Activated naive CD4-positive, alpha-beta T cell treated with anti-CD3 and anti-CD28 coated beads for 36 hours (primary cell): ENCODE measurements at regions of chr11 and their contacts with region 1.

Region 1: DNA sequence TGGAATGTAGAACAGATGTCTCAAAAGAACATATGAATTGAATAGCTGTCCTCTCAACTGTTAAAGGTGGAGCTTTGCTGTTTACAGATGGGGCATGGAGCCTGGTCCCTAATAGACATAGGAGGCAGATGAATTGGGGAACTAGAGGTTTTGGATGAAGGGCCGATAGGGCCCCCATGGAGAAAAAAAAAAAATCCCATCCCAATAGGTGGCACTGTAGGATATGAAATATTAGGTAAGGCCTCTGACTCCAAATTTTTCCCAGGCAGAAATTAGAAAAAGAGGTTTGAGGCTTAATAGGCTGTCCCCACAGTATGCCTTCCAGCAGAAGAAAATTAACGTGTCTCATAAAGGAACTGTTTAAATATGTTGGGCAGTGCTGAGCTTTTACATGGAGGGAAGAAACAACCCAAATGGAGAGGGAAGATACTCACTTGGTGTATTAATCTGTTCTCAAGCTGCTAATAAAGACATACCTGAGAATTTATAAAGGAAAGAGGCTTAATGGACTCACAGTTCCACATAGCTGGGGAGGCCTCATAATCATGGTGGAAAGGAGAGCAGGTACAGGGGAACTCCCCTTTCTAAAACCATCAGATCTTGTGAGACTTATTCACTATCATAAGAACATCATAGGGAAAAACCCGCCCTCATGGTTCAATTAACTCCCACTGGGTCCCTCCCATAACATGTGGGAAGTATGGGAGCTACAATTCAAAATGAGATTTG is 30.1 kb upstream of the TMEM45B start:
- DNase-seq: no peak
- H3K4me3 Mint-ChIP-seq: no peak overlapping the region
- H3K27ac Mint-ChIP-seq: no peak overlapping the region
- H3K4me1 Mint-ChIP-seq: peaks cover 17% of the 10 kb centered on the region
- H3K27me3 Mint-ChIP-seq: no peaks in the 10 kb centered on the region

Region 2: GRCh38 chr11:129853518-129854236 is 68.1 kb after region 1 on chr11:
- CTCF ChIA-PET with region 1: interaction called, 3 read pairs
- intact Hi-C with region 1: loop called (anchors 5 kb)
- DNase-seq: peak; percentile 84
- H3K4me3 Mint-ChIP-seq: no peak overlapping the region
- H3K27ac Mint-ChIP-seq: peak overlapping the region; percentile 86
- H3K4me1 Mint-ChIP-seq: peaks cover 38% of the 10 kb centered on the region
- H3K27me3 Mint-ChIP-seq: no peaks in the 10 kb centered on the region

Region 3: GRCh38 chr11:129895126-129896041 is 109.8 kb after region 1 on chr11 and contains the start of gene NFRKB:
- CTCF ChIA-PET with region 1: no interaction called
- intact Hi-C with region 1: loop called (anchors 5 kb)
- DNase-seq: peak; percentile 83
- H3K4me3 Mint-ChIP-seq: peak within 1 kb of the TSS; percentile 87
- H3K27ac Mint-ChIP-seq: peak within 1 kb of the TSS; percentile 79
- H3K4me1 Mint-ChIP-seq: peaks cover 27% of the 10 kb centered on the region
- H3K27me3 Mint-ChIP-seq: no peaks in the 10 kb centered on the region
- total RNA-seq, gene NFRKB: 34.0 to 36.4 TPM

Region 4: GRCh38 chr11:129922674-129923073 is 137.1 kb after region 1 on chr11:
- CTCF ChIA-PET with region 1: no interaction called
- intact Hi-C with region 1: loop called (anchors 1 kb)
- DNase-seq: no peak
- H3K4me3 Mint-ChIP-seq: no peak overlapping the region
- H3K27ac Mint-ChIP-seq: no peak overlapping the region
- H3K4me1 Mint-ChIP-seq: peaks cover 8% of the 10 kb centered on the region
- H3K27me3 Mint-ChIP-seq: no peaks in the 10 kb centered on the region

Region 5: DNA sequence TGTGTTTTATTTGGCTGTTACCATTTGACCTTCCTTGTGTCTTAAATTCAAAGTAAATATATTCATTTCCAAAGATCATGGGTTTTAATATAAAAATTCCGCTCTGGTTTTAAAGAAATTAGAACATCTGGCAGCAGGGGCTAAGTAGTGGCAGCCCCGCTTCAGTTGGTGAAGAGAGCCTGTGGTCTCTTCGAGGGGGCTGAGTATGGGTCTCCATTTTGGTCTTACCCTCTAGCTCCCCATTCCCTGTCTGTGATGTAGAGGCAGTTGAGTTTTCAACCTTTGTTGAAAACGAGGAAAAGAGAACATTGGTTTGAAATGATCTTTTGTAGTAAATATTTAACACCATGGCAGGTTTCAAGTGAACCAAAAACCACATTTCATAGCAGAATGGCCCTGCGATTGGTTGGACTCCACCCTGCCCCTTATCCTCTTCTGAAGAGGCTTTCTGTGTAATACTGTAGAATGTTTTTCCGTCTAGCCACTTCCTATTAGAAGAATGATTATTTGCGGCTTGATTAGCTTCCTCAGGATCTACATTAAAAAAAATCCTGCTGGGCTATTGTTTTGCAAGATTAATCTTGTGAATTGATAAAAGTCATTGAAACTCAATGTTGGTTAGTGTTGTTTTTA is 301.9 kb after region 1 on chr11:
- CTCF ChIA-PET with region 1: no interaction called
- intact Hi-C with region 1: no loop called
- DNase-seq: no peak
- H3K4me3 Mint-ChIP-seq: no peak overlapping the region
- H3K27ac Mint-ChIP-seq: no peak overlapping the region
- H3K4me1 Mint-ChIP-seq: peaks cover 3% of the 10 kb centered on the region
- H3K27me3 Mint-ChIP-seq: no peaks in the 10 kb centered on the region